Naive thymus-derived CD4-positive, alpha-beta T cell (primary cell): ENCODE measurements at regions of chr16 and their contacts with region 1.

Region 1: GRCh38 chr16:84062734-84063640 is 20.4 kb upstream of the SLC38A8 start:
- DNase-seq: peak; percentile 28 to 78 (median 51)
- ATAC-seq: peak; percentile 92
- H3K4me3 ChIP-seq: no peak overlapping the region
- H3K4me3 Mint-ChIP-seq: no peak overlapping the region
- H3K27ac ChIP-seq: no peak overlapping the region
- H3K27ac Mint-ChIP-seq: peak overlapping the region in 6 of 9 donors; percentile 21 to 83 (median 35)
- H3K4me1 ChIP-seq: no peaks in the 10 kb centered on the region
- H3K4me1 Mint-ChIP-seq: peaks cover 0 to 8% (median 0%) of the 10 kb centered on the region in 7 donors
- H3K27me3 ChIP-seq: no peaks in the 10 kb centered on the region
- H3K27me3 Mint-ChIP-seq: no peaks in the 10 kb centered on the region

Region 2: GRCh38 chr16:83952940-83953795 is 109.8 kb before region 1 on chr16 and contains the start of gene OSGIN1:
- CTCF ChIA-PET with region 1: interaction called, 4 read pairs
- POLR2A ChIA-PET with region 1: no interaction called
- intact Hi-C with region 1: loop called (anchors 1 to 10 kb)
- DNase-seq: peak in 4 of 9 donors; percentile 14 to 81 (median 28)
- ATAC-seq: peak; percentile 84
- H3K4me3 ChIP-seq: no peak within 1 kb of the TSS
- H3K4me3 Mint-ChIP-seq: peak within 1 kb of the TSS in 9 of 10 donors; percentile 48 to 86 (median 66)
- H3K27ac ChIP-seq: no peak within 1 kb of the TSS
- H3K27ac Mint-ChIP-seq: peak within 1 kb of the TSS in 1 of 9 donors; percentile 63
- H3K4me1 ChIP-seq: peaks cover 0 to 14% of the 10 kb centered on the region in 2 donors
- H3K4me1 Mint-ChIP-seq: peaks cover 0 to 12% (median 9%) of the 10 kb centered on the region in 7 donors
- H3K27me3 ChIP-seq: peaks cover 0 to 6% of the 10 kb centered on the region in 2 donors
- H3K27me3 Mint-ChIP-seq: peaks cover 7 to 36% (median 17%) of the 10 kb centered on the region in 5 donors
- total RNA-seq, gene OSGIN1: 0.34 to 8.4 (median 1.3) TPM

Region 3: DNA sequence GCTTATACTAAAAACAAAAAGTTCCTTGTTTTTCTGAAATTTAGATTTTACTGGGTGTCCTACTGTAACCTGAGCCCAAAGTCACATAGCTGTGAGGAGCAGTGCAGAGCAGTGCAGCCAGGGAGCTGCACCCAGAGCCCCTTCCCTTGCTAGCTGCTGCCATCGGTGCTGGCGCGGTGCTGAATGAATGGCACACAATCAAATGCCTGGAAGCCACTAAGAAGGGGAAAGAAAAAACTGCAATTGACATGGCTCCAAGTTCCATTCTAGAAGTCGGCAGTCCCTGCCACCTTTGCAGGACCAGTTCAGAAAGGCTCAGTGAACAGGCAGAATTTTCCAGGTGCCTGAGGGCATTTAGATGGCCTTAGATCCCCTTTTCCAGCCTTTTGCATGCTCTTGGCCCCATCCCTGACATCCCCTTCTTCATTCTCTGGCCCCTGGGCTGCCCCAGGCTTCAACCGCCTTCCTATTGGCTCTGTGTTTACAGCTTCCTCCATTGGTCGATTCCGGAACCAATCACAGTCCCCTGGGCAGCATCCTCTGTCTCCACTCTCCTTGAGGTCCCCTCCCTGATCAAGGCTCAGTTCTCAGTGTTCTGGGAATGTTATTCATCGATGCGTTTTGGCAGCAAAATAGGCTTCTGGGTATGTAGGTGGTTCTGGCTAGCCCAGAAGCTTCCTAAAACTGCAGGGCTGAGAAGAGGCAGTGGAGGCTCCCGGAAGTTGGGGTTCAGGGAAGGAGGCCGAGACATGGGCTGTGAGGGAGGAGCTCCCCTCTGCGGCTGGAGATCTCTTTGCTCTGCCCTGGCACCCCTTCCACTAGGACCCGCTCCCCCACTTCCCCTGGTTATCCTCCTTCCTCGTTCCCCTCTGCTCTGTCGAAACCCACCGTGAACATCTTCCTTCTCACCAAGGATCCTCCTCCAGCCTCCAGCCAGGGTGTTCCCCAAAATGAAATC is 343.3 kb after region 1 on chr16:
- CTCF ChIA-PET with region 1: no interaction called
- POLR2A ChIA-PET with region 1: no interaction called
- intact Hi-C with region 1: no loop called
- DNase-seq: no peak
- ATAC-seq: no peak
- H3K4me3 ChIP-seq: no peak overlapping the region
- H3K4me3 Mint-ChIP-seq: no peak overlapping the region
- H3K27ac ChIP-seq: no peak overlapping the region
- H3K27ac Mint-ChIP-seq: no peak overlapping the region
- H3K4me1 ChIP-seq: no peaks in the 10 kb centered on the region
- H3K4me1 Mint-ChIP-seq: peaks cover 0 to 3% (median 0%) of the 10 kb centered on the region in 7 donors
- H3K27me3 ChIP-seq: no peaks in the 10 kb centered on the region
- H3K27me3 Mint-ChIP-seq: peaks cover 25 to 50% (median 45%) of the 10 kb centered on the region in 5 donors